Activated CD4-positive, alpha-beta T cell treated with anti-CD3 and anti-CD28 coated beads for 36 hours (primary cell): ENCODE measurements at regions of chr2 and their contacts with region 1.

Region 1: GRCh38 chr2:84925724-84926376 is 20.4 kb downstream of the TMSB10 start:
- DNase-seq: peak; percentile 100
- ATAC-seq: peak; percentile 83
- H3K4me3 Mint-ChIP-seq: peak overlapping the region; percentile 87
- H3K27ac Mint-ChIP-seq: peak overlapping the region; percentile 92
- H3K4me1 Mint-ChIP-seq: peaks cover 35% of the 10 kb centered on the region
- H3K27me3 Mint-ChIP-seq: no peaks in the 10 kb centered on the region

Region 2: GRCh38 chr2:84631047-84631446 is 294.8 kb before region 1 on chr2:
- CTCF ChIA-PET with region 1: interaction called, 3 read pairs
- POLR2A ChIA-PET with region 1: no interaction called
- intact Hi-C with region 1: loop called in 1 of 2 experiments (anchors 2 kb)
- DNase-seq: no peak
- ATAC-seq: peak; percentile 74
- H3K4me3 Mint-ChIP-seq: no peak overlapping the region
- H3K27ac Mint-ChIP-seq: no peak overlapping the region
- H3K4me1 Mint-ChIP-seq: peaks cover 16% of the 10 kb centered on the region
- H3K27me3 Mint-ChIP-seq: no peaks in the 10 kb centered on the region

Region 3: DNA sequence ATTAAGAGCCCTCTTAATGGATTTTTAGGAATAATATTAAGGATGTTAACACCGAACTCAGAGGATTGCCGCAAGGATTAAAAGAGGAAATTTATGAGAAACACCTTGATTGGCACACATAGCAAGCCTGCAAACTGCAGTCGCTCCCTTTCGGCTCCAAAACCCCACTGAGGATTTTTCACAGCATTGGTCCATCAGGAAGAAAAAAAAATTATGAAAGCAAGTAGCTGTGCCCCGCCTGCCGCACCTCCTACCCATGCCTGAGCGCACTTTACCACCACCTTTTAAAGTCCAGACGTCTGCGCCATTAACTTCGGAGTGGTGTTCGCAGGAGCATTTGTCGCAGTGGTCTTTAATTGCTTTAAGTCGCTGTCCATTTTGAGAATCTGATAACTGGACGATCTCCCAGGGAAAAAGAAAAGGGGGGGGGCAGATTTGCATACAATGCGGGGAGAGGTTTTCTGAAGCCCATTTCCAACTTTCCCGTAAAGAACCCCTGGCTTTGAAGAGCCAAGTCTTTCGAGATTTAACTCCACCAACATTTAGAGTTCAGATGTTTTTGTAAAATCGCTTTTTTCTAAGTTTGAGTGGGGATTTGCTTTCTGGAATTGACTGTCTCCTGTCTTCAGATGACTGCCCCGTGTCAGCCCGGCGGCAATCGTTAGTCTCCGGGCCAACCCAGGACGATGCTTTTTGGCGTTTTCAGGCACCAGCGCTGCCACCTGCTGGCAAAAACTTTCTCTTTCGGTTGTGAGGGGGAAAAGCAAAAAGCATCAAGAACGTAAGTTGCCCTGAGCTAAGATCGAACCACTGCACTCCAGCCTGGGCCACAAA is 44.1 kb before region 1 on chr2:
- CTCF ChIA-PET with region 1: interaction called, 45 read pairs
- POLR2A ChIA-PET with region 1: interaction called, 7 read pairs
- intact Hi-C with region 1: loop called (anchors 1 kb)
- DNase-seq: peak; percentile 95
- ATAC-seq: peak; percentile 75
- H3K4me3 Mint-ChIP-seq: peak overlapping the region; percentile 82
- H3K27ac Mint-ChIP-seq: peak overlapping the region; percentile 91
- H3K4me1 Mint-ChIP-seq: peaks cover 58% of the 10 kb centered on the region
- H3K27me3 Mint-ChIP-seq: no peaks in the 10 kb centered on the region

Region 4: DNA sequence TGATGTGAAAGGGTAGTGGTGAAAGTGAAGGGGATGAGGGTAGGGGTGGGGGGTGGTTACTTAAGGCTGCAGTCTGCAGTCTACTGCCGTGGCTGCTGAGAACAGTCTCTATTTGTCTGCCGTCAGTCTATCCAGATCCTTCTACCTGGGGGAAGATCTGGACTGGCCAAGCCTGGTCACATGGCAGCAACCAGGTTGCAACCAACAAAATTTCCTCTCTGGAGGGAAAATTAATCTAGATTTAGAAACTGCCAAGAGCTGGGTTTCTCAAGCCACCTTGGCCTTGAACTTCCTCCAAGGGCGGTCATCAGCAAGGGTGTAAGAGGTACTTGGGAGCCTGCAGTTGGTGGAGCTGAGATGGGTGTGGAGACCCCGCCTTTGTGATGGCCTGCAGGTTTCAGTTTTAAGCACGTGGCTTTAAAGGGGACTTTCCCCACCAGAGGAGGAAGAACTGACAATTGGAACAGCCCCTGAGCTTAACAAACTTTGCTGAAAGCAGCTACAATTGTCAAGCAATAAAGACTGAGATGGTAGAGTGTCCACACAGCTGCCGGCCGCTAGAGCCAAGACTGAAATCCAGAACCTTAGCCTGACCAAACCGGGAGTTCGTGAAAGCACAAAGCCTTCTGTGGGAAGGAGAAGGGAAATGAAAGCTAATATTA is 13.7 kb after region 1 on chr2:
- CTCF ChIA-PET with region 1: interaction called, 54 read pairs
- POLR2A ChIA-PET with region 1: interaction called, 4 read pairs
- intact Hi-C with region 1: loop called (anchors 1 kb)
- DNase-seq: peak; percentile 83
- ATAC-seq: peak; percentile 76
- H3K4me3 Mint-ChIP-seq: peak overlapping the region; percentile 67
- H3K27ac Mint-ChIP-seq: peak overlapping the region; percentile 98
- H3K4me1 Mint-ChIP-seq: peaks cover 70% of the 10 kb centered on the region
- H3K27me3 Mint-ChIP-seq: no peaks in the 10 kb centered on the region

Region 5: DNA sequence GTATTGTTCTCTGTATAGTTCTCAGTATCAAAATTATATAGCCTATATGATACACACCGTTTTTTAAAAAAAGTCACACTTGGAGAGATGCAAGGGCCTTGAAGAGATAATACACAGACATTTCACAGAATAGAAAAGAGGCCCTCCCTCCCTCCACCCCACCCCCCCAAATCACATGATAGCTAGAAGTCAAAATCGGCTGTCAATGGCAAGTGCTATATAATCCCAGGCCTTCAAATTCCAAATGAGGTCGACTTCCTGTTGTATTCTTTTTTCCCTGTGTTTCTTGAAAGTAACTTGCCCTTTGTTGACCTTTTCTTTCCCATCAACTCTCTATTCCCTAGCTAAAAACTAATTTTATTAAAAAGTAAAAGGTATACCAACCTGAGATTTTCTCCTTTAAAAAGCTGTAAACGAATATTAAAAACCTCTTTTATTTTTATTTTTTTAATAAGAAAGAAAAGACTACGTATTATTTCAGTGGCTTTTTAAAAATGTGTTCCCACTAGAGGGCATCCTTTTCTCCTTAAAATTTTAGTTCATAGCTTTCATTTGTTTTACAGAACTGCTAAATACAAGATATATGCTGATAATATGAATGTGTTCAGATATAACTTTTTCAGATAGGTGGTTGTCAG is 91.7 kb after region 1 on chr2:
- CTCF ChIA-PET with region 1: interaction called, 66 read pairs
- POLR2A ChIA-PET with region 1: interaction called, 10 read pairs
- intact Hi-C with region 1: loop called (anchors 1 kb)
- DNase-seq: no peak
- ATAC-seq: peak; percentile 2
- H3K4me3 Mint-ChIP-seq: no peak overlapping the region
- H3K27ac Mint-ChIP-seq: peak overlapping the region; percentile 61
- H3K4me1 Mint-ChIP-seq: peaks cover 76% of the 10 kb centered on the region
- H3K27me3 Mint-ChIP-seq: no peaks in the 10 kb centered on the region

Region 6: GRCh38 chr2:85302121-85302520 is 376.3 kb after region 1 on chr2:
- CTCF ChIA-PET with region 1: interaction called, 8 read pairs
- POLR2A ChIA-PET with region 1: no interaction called
- intact Hi-C with region 1: loop called in 1 of 2 experiments (anchors 1 kb)
- DNase-seq: no peak
- ATAC-seq: no peak
- H3K4me3 Mint-ChIP-seq: no peak overlapping the region
- H3K27ac Mint-ChIP-seq: no peak overlapping the region
- H3K4me1 Mint-ChIP-seq: peaks cover 11% of the 10 kb centered on the region
- H3K27me3 Mint-ChIP-seq: no peaks in the 10 kb centered on the region